T-cell (primary cell): ENCODE measurements at regions of chr14 and their contacts with region 1.

Region 1: GRCh38 chr14:77580477-77580876 is 36.0 kb downstream of the SPTLC2 start:
- DNase-seq: no peak
- ATAC-seq: peak in 1 of 4 experiments; percentile 20
- H3K4me3 ChIP-seq: peak overlapping the region in 1 of 2 donors; percentile 1
- H3K4me3 Mint-ChIP-seq: peak overlapping the region; percentile 57 to 65 (median 60)
- H3K27ac ChIP-seq: peak overlapping the region; percentile 42
- H3K27ac Mint-ChIP-seq: peak overlapping the region; percentile 84 to 87
- H3K4me1 ChIP-seq: peaks cover 0 to 17% of the 10 kb centered on the region in 2 experiments
- H3K4me1 Mint-ChIP-seq: peaks cover 31 to 42% (median 33%) of the 10 kb centered on the region in 3 donors
- H3K27me3 ChIP-seq: no peaks in the 10 kb centered on the region
- H3K27me3 Mint-ChIP-seq: no peaks in the 10 kb centered on the region

Region 2: GRCh38 chr14:77390188-77390587 is 190.3 kb before region 1 on chr14:
- CTCF ChIA-PET with region 1: no interaction called
- POLR2A ChIA-PET with region 1: no interaction called
- DNase-seq: no peak
- ATAC-seq: no peak
- H3K4me3 ChIP-seq: no peak overlapping the region
- H3K4me3 Mint-ChIP-seq: no peak overlapping the region
- H3K27ac ChIP-seq: no peak overlapping the region
- H3K27ac Mint-ChIP-seq: no peak overlapping the region
- H3K4me1 ChIP-seq: no peaks in the 10 kb centered on the region
- H3K4me1 Mint-ChIP-seq: no peaks in the 10 kb centered on the region
- H3K27me3 ChIP-seq: no peaks in the 10 kb centered on the region
- H3K27me3 Mint-ChIP-seq: no peaks in the 10 kb centered on the region

Region 3: GRCh38 chr14:77691259-77691658 is 110.8 kb after region 1 on chr14:
- CTCF ChIA-PET with region 1: no interaction called
- POLR2A ChIA-PET with region 1: interaction called in 1 of 2 experiments, 11 read pairs
- DNase-seq: no peak
- ATAC-seq: no peak
- H3K4me3 ChIP-seq: no peak overlapping the region
- H3K4me3 Mint-ChIP-seq: no peak overlapping the region
- H3K27ac ChIP-seq: no peak overlapping the region
- H3K27ac Mint-ChIP-seq: no peak overlapping the region
- H3K4me1 ChIP-seq: no peaks in the 10 kb centered on the region
- H3K4me1 Mint-ChIP-seq: no peaks in the 10 kb centered on the region
- H3K27me3 ChIP-seq: no peaks in the 10 kb centered on the region
- H3K27me3 Mint-ChIP-seq: no peaks in the 10 kb centered on the region